ENCODE measurements at regions of chr5 and their contacts with region 1.

Region 1: DNA sequence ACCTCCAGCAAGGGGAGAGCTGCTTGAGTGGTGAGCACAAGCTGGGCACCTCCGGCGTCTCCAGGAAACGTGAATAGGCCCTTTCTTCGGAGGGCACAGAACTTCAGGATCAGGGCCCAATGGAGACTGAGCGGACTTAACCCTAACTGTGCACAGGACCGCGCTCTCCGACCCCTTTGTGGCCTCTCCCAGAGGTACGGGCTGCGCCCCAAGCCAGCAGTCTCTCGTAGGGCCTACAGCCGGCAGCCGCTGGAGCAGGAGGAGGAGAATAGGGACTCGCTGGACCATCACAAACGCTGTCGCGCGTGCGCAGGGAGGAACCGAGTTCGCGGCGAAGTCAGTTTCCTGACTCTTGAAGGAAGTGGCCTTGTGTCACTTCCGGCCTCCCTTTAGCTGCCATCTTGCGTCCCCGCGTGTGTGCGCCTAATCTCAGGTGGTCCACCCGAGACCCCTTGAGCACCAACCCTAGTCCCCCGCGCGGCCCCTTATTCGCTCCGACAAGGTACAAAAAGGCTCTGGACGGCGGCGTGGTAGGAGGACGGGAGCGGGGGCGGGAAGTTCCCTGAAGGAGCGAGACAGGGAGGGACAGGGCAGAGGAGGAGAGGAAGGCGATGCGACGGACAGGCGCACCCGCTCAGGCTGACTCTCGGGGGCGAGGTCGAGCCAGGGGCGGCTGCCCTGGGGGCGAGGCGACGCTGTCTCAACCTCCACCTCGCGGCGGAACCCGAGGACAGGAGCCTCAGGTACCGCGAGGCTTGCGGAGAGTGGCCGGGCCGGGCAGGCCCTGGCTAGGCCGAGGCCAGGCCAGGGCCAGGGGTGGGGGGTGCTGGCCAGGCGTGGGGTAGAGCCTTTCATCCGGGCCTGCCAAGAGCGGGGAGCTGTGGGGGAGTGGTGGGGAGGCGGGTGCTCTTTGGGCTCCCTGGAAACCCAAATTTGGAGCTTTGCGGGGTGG is at the start of gene BTF3:
- DNase-seq: peak; percentile 87 to 96 (median 92)
- H3K4me3 ChIP-seq: peak within 1 kb of the TSS; percentile 89
- H3K4me3 Mint-ChIP-seq: peak within 1 kb of the TSS; percentile 94 to 99 (median 98)
- H3K27ac ChIP-seq: peak within 1 kb of the TSS; percentile 98
- H3K27ac Mint-ChIP-seq: peak within 1 kb of the TSS; percentile 98 to 100 (median 99)
- H3K4me1 ChIP-seq: peaks cover 39% of the 10 kb centered on the region
- H3K4me1 Mint-ChIP-seq: peaks cover 37 to 57% (median 56%) of the 10 kb centered on the region in 3 donors
- H3K27me3 ChIP-seq: peaks cover 3% of the 10 kb centered on the region
- H3K27me3 Mint-ChIP-seq: peaks cover 3 to 17% of the 10 kb centered on the region in 2 donors
- total RNA-seq, gene BTF3: 1,052 to 1,053 TPM

Region 2: GRCh38 chr5:73376618-73377170 is 121.6 kb before region 1 on chr5:
- CTCF ChIA-PET with region 1: no interaction called
- POLR2A ChIA-PET with region 1: no interaction called
- DNase-seq: no peak
- H3K4me3 ChIP-seq: no peak overlapping the region
- H3K4me3 Mint-ChIP-seq: no peak overlapping the region
- H3K27ac ChIP-seq: no peak overlapping the region
- H3K27ac Mint-ChIP-seq: no peak overlapping the region
- H3K4me1 ChIP-seq: peaks cover 18% of the 10 kb centered on the region
- H3K4me1 Mint-ChIP-seq: peaks cover 15 to 20% (median 18%) of the 10 kb centered on the region in 3 donors
- H3K27me3 ChIP-seq: peaks cover 38% of the 10 kb centered on the region
- H3K27me3 Mint-ChIP-seq: peaks cover 66 to 90% of the 10 kb centered on the region in 2 donors

Region 3: DNA sequence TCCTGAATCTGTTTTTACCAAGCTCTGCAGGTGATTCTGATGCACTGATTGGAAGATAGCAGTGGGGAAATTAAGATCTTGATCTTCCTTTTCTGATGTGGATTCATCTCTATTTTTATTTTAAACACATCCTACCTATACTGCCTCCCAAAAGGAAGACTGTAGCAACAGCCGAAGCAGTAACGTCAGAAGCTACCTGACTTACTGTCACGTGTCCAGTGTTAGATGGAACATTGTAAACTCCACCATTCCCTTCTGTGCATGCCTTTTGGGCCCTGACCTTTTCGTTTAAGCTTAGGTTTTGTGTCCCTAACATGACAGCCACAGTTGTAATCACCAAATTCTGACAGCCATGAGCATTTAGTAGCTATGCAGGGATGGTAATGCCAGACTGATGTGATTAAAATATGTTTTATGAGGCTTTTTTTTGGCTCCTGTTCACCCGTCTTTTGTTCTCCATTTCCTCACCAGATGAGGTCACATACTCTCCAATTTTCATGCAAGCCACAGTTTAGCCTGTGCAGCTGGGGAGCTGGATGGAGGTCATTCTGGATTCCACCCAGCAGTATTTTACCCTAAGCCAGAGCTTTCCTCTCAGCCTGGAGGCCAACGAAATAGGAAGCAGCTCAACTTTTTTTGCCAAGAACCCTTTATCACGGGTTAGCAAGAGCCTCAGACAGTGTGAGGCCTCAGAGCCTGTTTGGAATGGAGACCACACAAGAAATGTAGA is 34.2 kb before region 1 on chr5:
- CTCF ChIA-PET with region 1: no interaction called
- POLR2A ChIA-PET with region 1: no interaction called
- DNase-seq: no peak
- H3K4me3 ChIP-seq: no peak overlapping the region
- H3K4me3 Mint-ChIP-seq: no peak overlapping the region
- H3K27ac ChIP-seq: no peak overlapping the region
- H3K27ac Mint-ChIP-seq: no peak overlapping the region
- H3K4me1 ChIP-seq: no peaks in the 10 kb centered on the region
- H3K4me1 Mint-ChIP-seq: no peaks in the 10 kb centered on the region
- H3K27me3 ChIP-seq: peaks cover 10% of the 10 kb centered on the region
- H3K27me3 Mint-ChIP-seq: peaks cover 18 to 45% of the 10 kb centered on the region in 2 donors

Region 4: GRCh38 chr5:73565139-73565968 is 67.0 kb after region 1 on chr5 and contains the starts of genes ANKRA2 and UTP15:
- CTCF ChIA-PET with region 1: no interaction called
- POLR2A ChIA-PET with region 1: interaction called, 13 read pairs
- DNase-seq: peak; percentile 96 to 99 (median 98)
- H3K4me3 ChIP-seq: peak within 1 kb of the TSS; percentile 76
- H3K4me3 Mint-ChIP-seq: peak within 1 kb of the TSS; percentile 98 to 100 (median 99)
- H3K27ac ChIP-seq: peak within 1 kb of the TSS; percentile 97
- H3K27ac Mint-ChIP-seq: peak within 1 kb of the TSS; percentile 98 to 100 (median 100)
- H3K4me1 ChIP-seq: peaks cover 24% of the 10 kb centered on the region
- H3K4me1 Mint-ChIP-seq: peaks cover 57 to 73% (median 71%) of the 10 kb centered on the region in 3 donors
- H3K27me3 ChIP-seq: no peaks in the 10 kb centered on the region
- H3K27me3 Mint-ChIP-seq: peaks cover 0 to 4% of the 10 kb centered on the region in 2 donors
- total RNA-seq, gene ANKRA2: 16.4 to 22.3 TPM
- total RNA-seq, gene UTP15: 53.4 to 56.5 TPM

Measured in CD8-positive, alpha-beta memory T cell (primary cell).